ENCODE measurements at regions of chr16 and their contacts with region 1.

Region 1: DNA sequence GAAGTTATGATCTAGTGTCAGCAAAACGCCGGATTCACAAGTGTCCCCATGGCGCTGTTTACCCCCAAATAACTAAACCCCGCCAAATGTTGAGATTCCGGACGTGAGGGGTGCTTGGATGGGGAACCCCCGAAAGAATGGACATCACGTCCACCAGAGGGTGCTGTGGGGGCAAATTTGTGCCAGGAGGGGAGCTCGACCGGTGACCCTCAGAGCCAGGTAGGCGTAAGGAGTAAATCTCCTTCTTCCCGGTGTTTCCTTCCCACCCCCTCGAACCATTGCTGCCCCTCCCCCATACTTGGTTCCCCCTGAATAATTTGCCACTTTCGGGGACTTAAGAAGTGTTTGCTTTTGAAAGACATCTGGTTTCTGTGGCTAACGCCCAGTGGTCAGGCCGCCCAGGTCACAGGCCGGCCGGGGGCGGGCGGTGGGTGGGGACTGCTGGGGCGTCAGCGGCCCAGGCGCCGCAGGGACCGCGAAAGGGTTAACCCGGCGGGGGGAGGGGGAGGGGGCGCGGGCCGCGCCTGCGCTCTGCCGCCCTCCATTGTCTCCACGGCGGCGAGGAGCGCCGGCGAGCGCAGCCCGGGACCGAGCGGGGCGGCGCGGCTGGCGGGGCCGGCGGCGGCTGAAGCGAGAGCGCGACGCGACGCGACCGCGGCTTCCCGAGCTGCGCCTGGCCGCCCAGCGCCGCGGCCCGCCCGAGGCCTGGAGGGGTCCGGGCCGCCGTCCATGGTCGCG is at the start of gene ZNRF1:
- DNase-seq: peak; percentile 64 to 94 (median 74)

Region 2: DNA sequence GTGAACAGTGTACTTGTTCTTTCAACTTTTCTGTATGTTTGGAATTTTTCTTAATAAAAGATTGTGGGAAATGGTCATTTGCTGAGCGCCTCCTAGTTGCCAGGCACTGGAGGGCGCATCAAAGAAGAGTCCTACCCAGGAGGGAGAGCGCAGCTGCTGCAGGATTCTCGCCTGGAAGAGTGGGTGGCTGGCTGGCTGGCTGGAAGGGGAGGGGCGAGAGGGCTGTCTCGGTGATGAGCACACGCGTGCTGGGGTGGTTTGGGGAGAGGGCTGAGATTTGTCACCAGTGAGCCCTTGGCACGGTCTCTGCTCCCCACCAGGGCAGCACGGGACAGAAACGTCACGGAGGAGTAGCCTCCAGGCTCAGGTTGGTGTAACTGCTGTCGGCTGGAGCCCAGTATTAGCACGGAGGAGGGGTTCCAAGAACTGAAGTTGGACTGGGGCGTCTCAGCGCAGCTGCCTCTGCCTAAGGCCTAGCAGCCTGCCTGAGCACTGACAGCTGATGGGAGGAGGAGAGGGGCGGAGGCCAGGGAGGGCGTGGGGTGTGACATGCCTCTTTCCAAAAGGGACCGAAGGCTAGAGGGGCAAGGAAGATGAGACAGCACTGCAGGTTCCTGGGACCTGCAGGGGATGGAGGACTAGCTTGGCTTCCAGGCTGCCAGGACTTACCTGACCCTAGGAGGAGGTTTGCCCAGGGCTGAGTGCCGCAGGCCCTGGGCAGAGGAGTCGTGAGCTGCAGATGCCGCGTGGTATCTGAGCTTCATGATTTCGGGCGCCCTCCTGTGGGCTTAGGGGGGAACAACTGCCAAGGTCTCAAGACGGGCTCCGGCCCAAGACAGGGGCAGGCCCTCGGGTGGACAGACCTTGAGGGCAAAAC is 112.2 kb after region 1 on chr16:
- intact Hi-C with region 1: loop called (anchors 1 kb)
- DNase-seq: peak; percentile 80 to 98 (median 91)

Region 3: DNA sequence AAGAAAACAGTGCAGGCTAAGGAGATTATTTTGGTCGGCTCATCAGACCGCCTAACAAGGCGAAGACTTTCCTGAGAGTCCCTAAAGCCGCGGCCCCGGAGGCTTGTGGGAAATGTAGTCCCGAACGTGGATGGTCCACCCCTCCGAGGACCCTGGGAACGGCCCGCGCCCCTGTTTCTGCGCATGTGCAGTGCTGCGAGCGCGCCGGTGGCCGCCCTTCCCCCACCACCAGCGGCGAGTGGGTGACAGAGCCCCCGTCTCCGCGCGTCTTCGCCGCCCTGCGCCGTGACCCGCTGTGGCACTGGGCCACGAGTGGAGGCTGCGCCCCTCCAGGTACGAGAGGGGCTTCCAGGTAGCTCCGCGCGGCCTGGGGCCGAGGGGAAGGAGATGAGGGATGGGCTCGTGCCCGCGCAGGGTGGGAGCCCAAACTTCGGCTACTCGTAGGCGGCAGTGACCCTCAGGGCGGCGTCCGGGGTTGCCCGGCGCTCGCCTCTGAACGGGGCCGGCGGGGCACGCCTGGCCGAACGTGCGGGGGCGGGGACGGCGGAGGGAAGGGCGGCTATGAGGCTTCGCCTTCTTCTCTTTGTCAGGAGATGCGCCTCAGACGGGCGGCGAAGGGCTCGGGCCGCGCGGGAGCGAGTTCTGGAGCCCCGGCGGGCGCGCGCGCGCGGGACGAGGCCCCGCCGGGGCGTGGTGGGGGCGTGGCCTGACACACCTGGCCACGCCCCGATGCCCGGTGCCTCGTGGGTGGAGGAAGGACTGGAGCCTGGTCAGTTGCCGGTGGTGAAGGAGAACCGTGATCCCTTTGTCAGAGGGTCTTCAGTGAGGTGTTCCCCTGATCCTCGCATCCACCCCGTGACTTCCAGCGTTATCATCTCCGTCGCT is 149.9 kb after region 1 on chr16 and contains the start of gene ZFP1:
- intact Hi-C with region 1: loop called (anchors 1 kb)
- DNase-seq: peak; percentile 88 to 99 (median 95)